CD4-positive, alpha-beta T cell (primary cell): ENCODE measurements at regions of chr10 and their contacts with region 1.

Region 1: DNA sequence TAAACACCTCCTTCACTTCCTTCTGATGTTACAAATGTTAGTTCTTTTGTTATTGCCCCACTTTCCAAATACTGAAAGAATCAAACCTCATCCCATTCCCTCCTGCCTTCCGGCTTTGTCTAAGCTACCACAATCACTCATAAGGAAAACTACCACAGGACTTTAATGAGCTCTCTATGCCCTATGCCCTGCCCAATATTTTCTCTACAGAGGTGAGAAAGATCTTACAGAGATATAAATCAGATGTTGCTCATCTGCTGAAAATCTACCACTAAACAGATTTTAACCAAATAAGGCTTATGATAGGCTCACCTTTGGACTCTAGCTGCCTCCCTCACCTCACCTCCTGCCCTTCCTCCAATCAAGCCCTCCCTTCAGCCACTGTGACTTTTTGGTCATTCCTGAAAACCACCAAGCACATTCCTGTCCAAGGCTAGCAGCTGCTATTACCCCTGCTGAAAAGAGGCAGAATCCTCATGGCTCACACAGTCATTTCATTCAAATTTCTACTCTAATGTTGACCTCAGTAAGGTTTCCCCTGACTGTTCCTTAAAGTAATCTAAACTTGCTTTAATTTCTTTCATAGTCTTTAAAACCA is 7.7 kb downstream of the ZNF33B start:
- DNase-seq: peak in 1 of 14 experiments; percentile 13
- ATAC-seq: no peak
- H3K4me3 ChIP-seq: no peak overlapping the region
- H3K4me3 Mint-ChIP-seq: no peak overlapping the region
- H3K27ac ChIP-seq: no peak overlapping the region
- H3K27ac Mint-ChIP-seq: peak overlapping the region; percentile 65
- H3K4me1 ChIP-seq: peaks cover 10% of the 10 kb centered on the region
- H3K4me1 Mint-ChIP-seq: peaks cover 59% of the 10 kb centered on the region
- H3K27me3 ChIP-seq: no peaks in the 10 kb centered on the region
- H3K27me3 Mint-ChIP-seq: no peaks in the 10 kb centered on the region
- CTCF ChIP-seq: no peak

Region 2: GRCh38 chr10:42475168-42476098 is 155.2 kb before region 1 on chr10:
- CTCF ChIA-PET with region 1: no interaction called
- POLR2A ChIA-PET with region 1: no interaction called
- intact Hi-C with region 1: loop called in 1 of 2 experiments (anchors 5 kb)
- DNase-seq: no peak
- ATAC-seq: no peak
- H3K4me3 ChIP-seq: no peak overlapping the region
- H3K4me3 Mint-ChIP-seq: no peak overlapping the region
- H3K27ac ChIP-seq: no peak overlapping the region
- H3K27ac Mint-ChIP-seq: no peak overlapping the region
- H3K4me1 ChIP-seq: no peaks in the 10 kb centered on the region
- H3K4me1 Mint-ChIP-seq: peaks cover 7% of the 10 kb centered on the region
- H3K27me3 ChIP-seq: peaks cover 3 to 11% of the 10 kb centered on the region in 2 experiments
- H3K27me3 Mint-ChIP-seq: peaks cover 64% of the 10 kb centered on the region
- CTCF ChIP-seq: no peak

Region 3: GRCh38 chr10:42615419-42615818 is 15.2 kb before region 1 on chr10:
- CTCF ChIA-PET with region 1: no interaction called
- POLR2A ChIA-PET with region 1: no interaction called
- intact Hi-C with region 1: loop called in 1 of 2 experiments (anchors 2 kb)
- DNase-seq: no peak
- ATAC-seq: no peak
- H3K4me3 ChIP-seq: no peak overlapping the region
- H3K4me3 Mint-ChIP-seq: no peak overlapping the region
- H3K27ac ChIP-seq: no peak overlapping the region
- H3K27ac Mint-ChIP-seq: no peak overlapping the region
- H3K4me1 ChIP-seq: peaks cover 3% of the 10 kb centered on the region
- H3K4me1 Mint-ChIP-seq: peaks cover 15% of the 10 kb centered on the region
- H3K27me3 ChIP-seq: no peaks in the 10 kb centered on the region
- H3K27me3 Mint-ChIP-seq: no peaks in the 10 kb centered on the region
- CTCF ChIP-seq: no peak